HepG2 (cell line): ENCODE measurements at regions of chr2 and their contacts with region 1.

Region 1: DNA sequence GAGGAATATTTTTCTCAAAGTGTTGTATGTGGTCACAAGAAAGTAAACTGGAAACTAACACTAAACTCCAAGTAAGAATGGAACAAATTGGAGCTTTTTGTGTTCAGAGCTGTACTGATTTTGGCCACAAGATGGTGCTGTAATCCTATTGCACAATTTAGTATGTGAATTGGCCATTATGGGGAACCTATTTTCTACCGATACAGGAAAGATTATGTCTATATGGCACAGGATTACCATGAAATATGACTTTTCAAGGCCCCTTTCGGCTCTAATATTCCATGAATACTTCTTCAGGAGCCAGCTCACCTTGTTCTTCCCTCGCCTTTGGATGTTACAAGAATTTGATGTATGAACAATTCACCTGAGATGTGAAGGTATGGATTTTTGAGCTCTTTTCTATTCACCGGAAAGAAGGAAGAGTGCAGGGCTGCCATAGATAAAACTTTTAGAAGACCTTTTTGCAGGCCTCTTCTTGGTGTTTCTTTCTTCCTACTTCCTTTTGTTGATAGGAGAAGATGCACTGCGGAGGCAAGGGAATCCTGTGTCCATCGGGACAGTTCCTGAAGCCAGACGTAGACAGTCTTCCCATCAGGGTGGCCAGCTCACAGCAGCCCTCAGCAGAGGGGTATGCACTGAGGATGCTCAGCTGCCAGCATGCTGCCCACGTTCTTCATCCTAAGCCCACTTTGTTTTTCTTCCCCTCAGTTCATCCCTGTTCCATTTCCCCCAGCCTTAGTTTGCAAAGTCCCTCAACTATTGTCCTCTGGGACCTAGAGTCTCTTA is 13.3 kb downstream of the MRPL44 start:
- DNase-seq: peak; percentile 66
- ATAC-seq: peak; percentile 62
- H3K4me3 ChIP-seq: no peak overlapping the region
- H3K27ac ChIP-seq: no peak overlapping the region
- H3K4me1 ChIP-seq: peaks cover 16% of the 10 kb centered on the region
- H3K27me3 ChIP-seq: no peaks in the 10 kb centered on the region
- CTCF ChIP-seq: peak; percentile 92
- EP300 ChIP-seq: peak in 1 of 2 experiments; percentile 25; a peak in 1 of 4 replicates
- POLR2A ChIP-seq: no peak
- RAD21 ChIP-seq: peak; percentile 89

Region 2: GRCh38 chr2:222774968-222775367 is 1195.6 kb before region 1 on chr2:
- CTCF ChIA-PET with region 1: no interaction called
- POLR2A ChIA-PET with region 1: no interaction called
- in situ Hi-C with region 1: no loop called
- intact Hi-C with region 1: no loop called
- DNase-seq: peak; percentile 32
- ATAC-seq: peak; percentile 25; the same call in 2 of the 3 replicates
- H3K4me3 ChIP-seq: no peak overlapping the region
- H3K27ac ChIP-seq: no peak overlapping the region
- H3K4me1 ChIP-seq: peaks cover 61% of the 10 kb centered on the region
- H3K27me3 ChIP-seq: no peaks in the 10 kb centered on the region
- CTCF ChIP-seq: no peak
- EP300 ChIP-seq: no peak
- POLR2A ChIP-seq: no peak
- RAD21 ChIP-seq: no peak

Region 3: GRCh38 chr2:224039124-224039940 is 68.8 kb after region 1 on chr2 and contains the start of gene SERPINE2:
- CTCF ChIA-PET with region 1: interaction called, 3 read pairs
- POLR2A ChIA-PET with region 1: interaction called, 5 read pairs
- in situ Hi-C with region 1: no loop called
- intact Hi-C with region 1: loop called (anchors 2 kb)
- DNase-seq: no peak
- ATAC-seq: peak; percentile 72
- H3K4me3 ChIP-seq: peak within 1 kb of the TSS; percentile 69 to 84 (median 77)
- H3K27ac ChIP-seq: no peak within 1 kb of the TSS
- H3K4me1 ChIP-seq: peaks cover 32% of the 10 kb centered on the region
- H3K27me3 ChIP-seq: peaks cover 3 to 54% of the 10 kb centered on the region in 2 experiments; a peak in 4 of 5 replicates
- CTCF ChIP-seq: peak; percentile 93
- EP300 ChIP-seq: no peak
- POLR2A ChIP-seq: no peak
- RAD21 ChIP-seq: peak; percentile 47
- total RNA-seq, gene SERPINE2: 5.5 and 7.9 TPM in 2 replicates

Region 4: GRCh38 chr2:224284134-224284946 is 313.8 kb after region 1 on chr2:
- CTCF ChIA-PET with region 1: interaction called, 120 read pairs
- POLR2A ChIA-PET with region 1: interaction called, 6 read pairs
- in situ Hi-C with region 1: no loop called
- intact Hi-C with region 1: loop called (anchors 1 kb)
- DNase-seq: peak; percentile 73
- ATAC-seq: peak; percentile 85
- H3K4me3 ChIP-seq: no peak overlapping the region
- H3K27ac ChIP-seq: no peak overlapping the region
- H3K4me1 ChIP-seq: no peaks in the 10 kb centered on the region
- H3K27me3 ChIP-seq: no peaks in the 10 kb centered on the region
- CTCF ChIP-seq: peak; percentile 97
- EP300 ChIP-seq: no peak
- POLR2A ChIP-seq: no peak
- RAD21 ChIP-seq: peak; percentile 92

Region 5: GRCh38 chr2:224357098-224357901 is 386.8 kb after region 1 on chr2:
- CTCF ChIA-PET with region 1: interaction called, 8 read pairs
- POLR2A ChIA-PET with region 1: no interaction called
- in situ Hi-C with region 1: no loop called
- intact Hi-C with region 1: loop called (anchors 1 kb)
- DNase-seq: peak; percentile 58
- ATAC-seq: peak; percentile 86
- H3K4me3 ChIP-seq: no peak overlapping the region
- H3K27ac ChIP-seq: no peak overlapping the region
- H3K4me1 ChIP-seq: no peaks in the 10 kb centered on the region
- H3K27me3 ChIP-seq: peaks cover 0 to 10% of the 10 kb centered on the region in 2 experiments; a peak in 2 of 5 replicates
- CTCF ChIP-seq: peak; percentile 90
- EP300 ChIP-seq: no peak
- POLR2A ChIP-seq: no peak
- RAD21 ChIP-seq: peak; percentile 65

Region 6: DNA sequence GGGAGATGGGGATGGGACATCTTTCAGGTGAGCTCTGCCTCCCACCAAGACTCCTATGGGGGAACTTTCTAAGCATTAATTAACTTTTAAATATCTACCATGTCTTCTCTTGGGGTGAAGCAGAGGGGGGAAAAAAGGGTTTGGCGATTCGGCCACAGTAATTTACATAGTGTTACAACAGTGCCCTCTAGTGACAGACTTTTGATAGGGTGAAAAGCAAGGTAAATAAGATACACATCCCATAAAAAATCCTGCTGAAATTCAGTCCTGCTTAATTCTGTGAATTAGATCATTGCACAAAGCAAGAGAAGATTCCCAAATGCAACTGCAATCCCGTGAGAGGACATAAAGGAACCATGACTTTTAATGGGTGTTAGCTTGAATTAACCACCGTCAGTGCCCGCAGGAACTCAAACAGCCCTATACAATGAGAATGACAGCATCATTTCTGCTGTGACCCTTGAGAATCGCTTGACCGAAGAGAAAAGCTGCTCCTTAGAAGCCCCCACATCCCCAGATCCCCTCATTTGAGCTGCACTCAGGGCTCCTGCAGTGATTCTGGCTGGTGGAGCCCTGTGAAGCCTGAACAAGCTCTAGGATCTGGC is 398.6 kb after region 1 on chr2:
- CTCF ChIA-PET with region 1: interaction called, 6 read pairs
- POLR2A ChIA-PET with region 1: no interaction called
- in situ Hi-C with region 1: no loop called
- intact Hi-C with region 1: loop called (anchors 1 kb)
- DNase-seq: peak; percentile 45
- ATAC-seq: peak; percentile 76
- H3K4me3 ChIP-seq: no peak overlapping the region
- H3K27ac ChIP-seq: no peak overlapping the region
- H3K4me1 ChIP-seq: no peaks in the 10 kb centered on the region
- H3K27me3 ChIP-seq: peaks cover 2 to 6% of the 10 kb centered on the region in 2 experiments; a peak in 2 of 5 replicates
- CTCF ChIP-seq: peak; percentile 65
- EP300 ChIP-seq: no peak
- POLR2A ChIP-seq: no peak
- RAD21 ChIP-seq: no peak

Region 7: GRCh38 chr2:224449212-224450147 is 478.9 kb after region 1 on chr2:
- CTCF ChIA-PET with region 1: no interaction called
- POLR2A ChIA-PET with region 1: no interaction called
- in situ Hi-C with region 1: no loop called
- intact Hi-C with region 1: loop called (anchors 2 kb)
- DNase-seq: peak; percentile 44
- ATAC-seq: peak; percentile 83
- H3K4me3 ChIP-seq: no peak overlapping the region
- H3K27ac ChIP-seq: no peak overlapping the region
- H3K4me1 ChIP-seq: no peaks in the 10 kb centered on the region
- H3K27me3 ChIP-seq: no peaks in the 10 kb centered on the region
- CTCF ChIP-seq: peak; percentile 59
- EP300 ChIP-seq: no peak
- POLR2A ChIP-seq: no peak
- RAD21 ChIP-seq: peak; percentile 39; the same call in 1 of the 2 replicates

Region 8: DNA sequence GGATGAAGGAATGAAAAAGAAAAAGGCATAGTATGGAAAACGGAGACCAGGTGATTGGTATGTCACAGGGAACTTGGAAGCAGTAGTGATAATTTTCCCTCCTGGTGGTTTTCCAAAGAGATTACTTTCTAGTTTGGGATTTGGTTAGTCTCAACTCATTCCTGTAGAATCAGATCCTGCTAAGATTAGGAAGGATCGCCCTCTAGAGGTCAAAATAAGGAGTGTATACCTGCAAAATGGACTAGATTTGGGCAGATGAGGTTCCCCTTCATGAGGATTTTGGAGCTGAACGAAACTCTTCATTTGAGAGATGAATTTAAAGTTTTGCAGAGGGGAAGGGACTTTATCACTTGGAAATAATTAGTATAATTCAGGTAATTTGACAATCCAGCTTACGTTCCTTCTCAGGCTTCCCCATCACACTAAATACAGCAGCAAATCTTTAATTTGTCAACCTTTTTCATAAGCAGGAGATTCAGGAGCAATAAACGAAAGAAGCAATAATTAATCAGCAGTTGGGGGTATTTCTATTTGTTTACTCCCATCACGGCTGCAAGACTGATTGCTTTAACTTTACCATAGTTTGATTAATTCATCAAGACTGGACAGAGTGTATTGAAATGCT is 680.4 kb after region 1 on chr2:
- CTCF ChIA-PET with region 1: no interaction called
- POLR2A ChIA-PET with region 1: no interaction called
- in situ Hi-C with region 1: no loop called
- intact Hi-C with region 1: loop called (anchors 2 kb)
- DNase-seq: peak; percentile 57
- ATAC-seq: peak; percentile 90
- H3K4me3 ChIP-seq: no peak overlapping the region
- H3K27ac ChIP-seq: no peak overlapping the region
- H3K4me1 ChIP-seq: no peaks in the 10 kb centered on the region
- H3K27me3 ChIP-seq: no peaks in the 10 kb centered on the region
- CTCF ChIP-seq: peak; percentile 82
- EP300 ChIP-seq: no peak
- POLR2A ChIP-seq: no peak
- RAD21 ChIP-seq: peak; percentile 66